ENCODE measurements at regions of chr1 and their contacts with region 1.

Region 1: DNA sequence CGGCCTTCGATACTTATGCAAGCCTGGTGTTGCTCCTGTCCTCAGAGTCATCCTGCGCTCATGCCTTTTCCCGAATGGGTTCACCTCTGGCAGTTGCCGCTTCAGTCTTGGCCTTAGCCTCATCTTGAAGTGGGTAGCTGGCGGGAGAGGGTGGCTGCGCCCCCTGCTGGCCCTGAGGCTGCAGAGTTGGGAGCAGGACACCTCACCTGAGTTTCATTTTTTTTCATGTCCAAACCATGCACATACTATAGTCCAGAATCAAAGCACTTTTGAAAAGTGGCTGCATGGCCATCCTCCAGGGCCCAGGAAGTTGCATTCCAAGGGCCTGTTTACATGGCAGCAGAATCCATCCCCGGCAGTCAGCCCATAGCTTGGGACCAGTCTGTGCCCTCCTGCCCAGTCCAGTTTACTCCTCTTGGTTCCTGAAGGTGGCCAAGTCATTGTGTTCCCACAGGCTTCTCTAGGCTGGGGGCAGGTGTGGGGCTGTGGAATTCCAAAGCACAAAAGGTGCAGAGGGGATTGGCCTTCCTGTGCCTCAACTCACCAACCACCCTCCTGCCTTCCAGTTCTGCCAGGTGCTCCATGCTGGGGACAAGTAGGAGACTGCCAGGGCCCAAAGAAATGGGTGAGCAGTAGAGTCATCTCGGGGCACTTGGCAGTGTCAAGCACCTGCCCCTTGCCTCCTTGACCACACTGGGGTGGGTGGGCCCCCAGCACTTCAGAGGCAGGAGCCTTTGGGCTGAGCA is 44.0 kb downstream of the YARS1 start:
- DNase-seq: peak; percentile 76 to 82
- ATAC-seq: peak; percentile 59 to 83
- H3K4me3 ChIP-seq: no peak overlapping the region
- H3K27ac ChIP-seq: peak overlapping the region; percentile 28 to 99; a peak in 5 of 6 replicates
- H3K4me1 ChIP-seq: peaks cover 80% of the 10 kb centered on the region
- CTCF ChIP-seq: peak; percentile 88
- EP300 ChIP-seq: no peak
- POLR2A ChIP-seq: no peak
- RAD21 ChIP-seq: peak; percentile 87 to 88

Region 2: GRCh38 chr1:32400876-32401631 is 372.1 kb before region 1 on chr1:
- CTCF ChIA-PET with region 1: interaction called, 17 read pairs
- POLR2A ChIA-PET with region 1: no interaction called
- DNase-seq: peak; percentile 67 to 84
- ATAC-seq: peak; percentile 99
- H3K4me3 ChIP-seq: no peak overlapping the region
- H3K27ac ChIP-seq: peak overlapping the region; percentile 54 to 66
- H3K4me1 ChIP-seq: no peaks in the 10 kb centered on the region
- CTCF ChIP-seq: peak; percentile 72
- EP300 ChIP-seq: no peak
- POLR2A ChIP-seq: no peak
- RAD21 ChIP-seq: peak; percentile 80 to 83

Region 3: GRCh38 chr1:32741413-32742198 is 31.6 kb before region 1 on chr1:
- CTCF ChIA-PET with region 1: interaction called, 10 read pairs
- POLR2A ChIA-PET with region 1: no interaction called
- DNase-seq: peak in 1 of 2 experiments; percentile 69
- ATAC-seq: peak; percentile 70 to 76
- H3K4me3 ChIP-seq: peak overlapping the region; percentile 82
- H3K27ac ChIP-seq: peak overlapping the region; percentile 90 to 100
- H3K4me1 ChIP-seq: peaks cover 46% of the 10 kb centered on the region
- CTCF ChIP-seq: peak; percentile 52
- EP300 ChIP-seq: no peak
- POLR2A ChIP-seq: no peak
- RAD21 ChIP-seq: peak in 1 of 2 experiments; percentile 48; a peak in 3 of 5 replicates

Region 4: GRCh38 chr1:32761253-32761880 is 11.8 kb before region 1 on chr1:
- CTCF ChIA-PET with region 1: interaction called, 45 read pairs
- POLR2A ChIA-PET with region 1: interaction called, 9 read pairs
- DNase-seq: peak in 1 of 2 experiments; percentile 74
- ATAC-seq: peak; percentile 23 to 31; a peak in 4 of 6 replicates
- H3K4me3 ChIP-seq: 0 out of 3 replicates have a peak overlapping the region, but pooled peaks have one; percentile 21
- H3K27ac ChIP-seq: peak overlapping the region; percentile 99
- H3K4me1 ChIP-seq: peaks cover 88% of the 10 kb centered on the region
- CTCF ChIP-seq: no peak
- EP300 ChIP-seq: no peak; a peak in 1 of 5 replicates
- POLR2A ChIP-seq: no peak
- RAD21 ChIP-seq: no peak

Region 5: DNA sequence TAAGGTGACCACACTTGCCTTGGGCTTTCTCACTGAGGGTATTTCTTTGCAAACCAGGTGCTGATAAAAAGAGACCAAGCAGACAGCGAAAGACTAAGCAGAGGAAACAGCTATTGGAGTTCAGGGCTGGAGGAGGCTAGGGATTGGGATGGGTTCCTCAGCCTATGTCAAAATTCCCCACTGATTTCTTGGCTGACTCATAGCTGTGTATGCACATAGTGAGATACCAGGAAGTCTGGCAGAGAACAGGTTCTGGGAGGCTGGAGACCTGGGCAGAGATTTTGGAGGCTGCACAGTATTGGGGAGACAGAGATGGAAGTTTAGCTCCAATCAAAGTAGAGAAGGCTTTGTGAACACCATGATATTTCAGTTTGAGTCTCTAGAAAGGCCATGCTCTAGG is 18.7 kb after region 1 on chr1:
- CTCF ChIA-PET with region 1: interaction called, 20 read pairs
- POLR2A ChIA-PET with region 1: interaction called, 3 read pairs
- DNase-seq: peak; percentile 29 to 30
- ATAC-seq: peak; percentile 84 to 90; a peak in 5 of 6 replicates
- H3K4me3 ChIP-seq: no peak overlapping the region
- H3K27ac ChIP-seq: peak overlapping the region in 1 of 2 experiments; percentile 71; a peak in 3 of 6 replicates
- H3K4me1 ChIP-seq: peaks cover 32% of the 10 kb centered on the region
- CTCF ChIP-seq: no peak
- EP300 ChIP-seq: no peak
- POLR2A ChIP-seq: no peak
- RAD21 ChIP-seq: no peak

Region 6: DNA sequence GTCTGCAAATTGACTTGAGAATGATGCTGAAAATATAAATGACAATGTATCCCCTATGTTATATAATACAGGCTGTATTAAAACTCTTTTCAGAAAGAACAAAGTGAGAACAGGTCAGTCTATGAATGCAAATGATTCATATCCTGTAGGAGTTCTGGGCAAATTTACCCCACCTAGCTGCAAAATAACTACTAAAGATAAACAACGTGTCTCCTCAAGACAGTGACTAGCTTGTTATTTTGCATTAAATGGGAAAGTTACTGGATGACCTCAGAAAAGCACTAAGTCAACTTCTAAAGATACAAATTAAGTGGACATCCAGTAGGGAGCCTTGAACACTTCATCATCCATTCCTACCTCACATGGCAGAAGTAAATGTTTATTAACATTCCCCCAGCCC is 180.3 kb after region 1 on chr1:
- CTCF ChIA-PET with region 1: no interaction called
- POLR2A ChIA-PET with region 1: no interaction called
- DNase-seq: peak in 1 of 2 experiments; percentile 48
- ATAC-seq: peak in 1 of 2 experiments; percentile 59; a peak in 2 of 6 replicates
- H3K4me3 ChIP-seq: no peak overlapping the region
- H3K27ac ChIP-seq: peak overlapping the region in 1 of 2 experiments; percentile 48; a peak in 2 of 6 replicates
- H3K4me1 ChIP-seq: peaks cover 37% of the 10 kb centered on the region
- CTCF ChIP-seq: no peak
- EP300 ChIP-seq: no peak
- POLR2A ChIP-seq: no peak
- RAD21 ChIP-seq: no peak

Region 7: GRCh38 chr1:33244143-33244820 is 471.1 kb after region 1 on chr1:
- CTCF ChIA-PET with region 1: no interaction called
- POLR2A ChIA-PET with region 1: no interaction called
- DNase-seq: no peak
- ATAC-seq: no peak
- H3K4me3 ChIP-seq: no peak overlapping the region
- H3K27ac ChIP-seq: no peak overlapping the region
- H3K4me1 ChIP-seq: no peaks in the 10 kb centered on the region
- CTCF ChIP-seq: no peak
- EP300 ChIP-seq: no peak
- POLR2A ChIP-seq: no peak
- RAD21 ChIP-seq: no peak